ENCODE measurements at regions of chr12 and their contacts with region 1.

Region 1: DNA sequence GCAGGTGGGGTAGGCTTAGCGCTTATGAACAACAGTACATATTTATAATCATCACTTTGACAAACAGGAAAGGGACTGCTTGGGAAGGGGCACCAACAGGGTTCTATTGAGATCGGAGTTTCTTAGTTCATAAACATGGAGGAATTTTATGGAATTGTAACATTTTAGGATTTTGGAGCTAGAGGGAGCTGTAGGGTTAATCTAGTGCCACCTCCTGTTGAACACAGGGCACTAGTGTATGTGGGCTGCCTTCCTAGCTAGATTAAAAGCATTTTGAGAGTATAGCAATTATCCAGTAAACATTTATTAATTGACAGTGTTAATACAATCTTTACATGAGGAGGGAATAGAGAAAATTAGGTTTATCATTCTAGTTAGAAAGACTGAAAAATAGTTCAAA is 23.1 kb upstream of the TBC1D30 start:
- DNase-seq: no peak
- ATAC-seq: no peak
- H3K4me3 ChIP-seq: no peak overlapping the region
- H3K4me3 Mint-ChIP-seq: no peak overlapping the region
- H3K27ac ChIP-seq: no peak overlapping the region
- H3K27ac Mint-ChIP-seq: no peak overlapping the region
- H3K4me1 ChIP-seq: no peaks in the 10 kb centered on the region
- H3K4me1 Mint-ChIP-seq: peaks cover 0 to 6% (median 0%) of the 10 kb centered on the region in 7 donors
- H3K27me3 ChIP-seq: no peaks in the 10 kb centered on the region
- H3K27me3 Mint-ChIP-seq: peaks cover 17 to 38% (median 32%) of the 10 kb centered on the region in 5 donors

Region 2: GRCh38 chr12:65121049-65121955 is 319.9 kb after region 1 on chr12 and contains the start of gene WIF1:
- CTCF ChIA-PET with region 1: no interaction called
- POLR2A ChIA-PET with region 1: no interaction called
- intact Hi-C with region 1: loop called (anchors 2 to 5 kb)
- DNase-seq: peak in 5 of 9 donors; percentile 6 to 34 (median 10)
- ATAC-seq: peak; percentile 66
- H3K4me3 ChIP-seq: peak within 1 kb of the TSS; percentile 22
- H3K4me3 Mint-ChIP-seq: peak within 1 kb of the TSS; percentile 42 to 77 (median 62)
- H3K27ac ChIP-seq: no peak within 1 kb of the TSS
- H3K27ac Mint-ChIP-seq: peak within 1 kb of the TSS in 1 of 9 donors; percentile 62
- H3K4me1 ChIP-seq: no peaks in the 10 kb centered on the region
- H3K4me1 Mint-ChIP-seq: peaks cover 0 to 12% (median 8%) of the 10 kb centered on the region in 7 donors
- H3K27me3 ChIP-seq: peaks cover 0 to 6% of the 10 kb centered on the region in 2 donors
- H3K27me3 Mint-ChIP-seq: peaks cover 41 to 59% (median 52%) of the 10 kb centered on the region in 5 donors
- total RNA-seq, gene WIF1: not detected

Measured in naive thymus-derived CD4-positive, alpha-beta T cell (primary cell).